GM10248 (cell line): ENCODE measurements at regions of chr11 and their contacts with region 1.

Region 1: GRCh38 chr11:68843703-68844312 is 2.1 kb upstream of the CPT1A start:
- DNase-seq: peak; percentile 85
- CTCF ChIP-seq: peak; percentile 76

Region 2: GRCh38 chr11:68816917-68817419 is 26.8 kb before region 1 on chr11:
- CTCF ChIA-PET with region 1: no interaction called
- POLR2A ChIA-PET with region 1: no interaction called
- DNase-seq: no peak
- CTCF ChIP-seq: no peak

Region 3: DNA sequence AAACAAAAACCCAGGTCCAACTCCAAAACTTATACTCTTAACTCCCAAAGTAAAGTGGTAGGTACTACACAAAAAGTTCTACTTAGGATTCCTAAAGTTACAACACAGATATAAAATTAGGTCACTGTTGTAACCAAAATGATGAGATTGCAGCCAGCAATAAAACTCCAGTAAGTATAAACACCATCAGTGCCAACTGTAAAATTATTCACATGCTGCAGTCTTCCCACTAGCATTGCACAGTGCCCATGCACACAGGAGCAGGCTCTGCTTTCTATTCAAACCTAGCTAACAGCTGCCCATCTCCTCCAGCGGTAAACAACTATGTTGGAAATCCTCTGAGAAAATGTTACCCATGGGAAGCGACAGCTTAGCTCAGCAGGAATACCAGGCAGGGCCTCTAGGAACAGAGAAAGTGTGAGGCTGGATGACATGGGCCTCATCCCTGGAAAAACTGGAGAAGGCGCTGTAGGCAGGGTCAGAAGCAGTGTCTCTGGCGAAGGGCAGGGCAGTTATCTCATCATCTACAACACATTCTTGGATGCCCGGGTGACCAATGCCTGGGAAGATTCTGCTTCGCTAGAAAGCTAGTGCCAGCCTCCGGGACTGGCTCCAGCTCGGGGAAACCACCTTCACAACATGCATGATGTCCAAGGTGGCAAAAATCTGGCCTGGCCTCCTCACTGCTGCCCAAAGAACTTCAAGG is 11.2 kb before region 1 on chr11:
- CTCF ChIA-PET with region 1: interaction called, 10 read pairs
- POLR2A ChIA-PET with region 1: no interaction called
- DNase-seq: no peak
- CTCF ChIP-seq: no peak

Region 4: DNA sequence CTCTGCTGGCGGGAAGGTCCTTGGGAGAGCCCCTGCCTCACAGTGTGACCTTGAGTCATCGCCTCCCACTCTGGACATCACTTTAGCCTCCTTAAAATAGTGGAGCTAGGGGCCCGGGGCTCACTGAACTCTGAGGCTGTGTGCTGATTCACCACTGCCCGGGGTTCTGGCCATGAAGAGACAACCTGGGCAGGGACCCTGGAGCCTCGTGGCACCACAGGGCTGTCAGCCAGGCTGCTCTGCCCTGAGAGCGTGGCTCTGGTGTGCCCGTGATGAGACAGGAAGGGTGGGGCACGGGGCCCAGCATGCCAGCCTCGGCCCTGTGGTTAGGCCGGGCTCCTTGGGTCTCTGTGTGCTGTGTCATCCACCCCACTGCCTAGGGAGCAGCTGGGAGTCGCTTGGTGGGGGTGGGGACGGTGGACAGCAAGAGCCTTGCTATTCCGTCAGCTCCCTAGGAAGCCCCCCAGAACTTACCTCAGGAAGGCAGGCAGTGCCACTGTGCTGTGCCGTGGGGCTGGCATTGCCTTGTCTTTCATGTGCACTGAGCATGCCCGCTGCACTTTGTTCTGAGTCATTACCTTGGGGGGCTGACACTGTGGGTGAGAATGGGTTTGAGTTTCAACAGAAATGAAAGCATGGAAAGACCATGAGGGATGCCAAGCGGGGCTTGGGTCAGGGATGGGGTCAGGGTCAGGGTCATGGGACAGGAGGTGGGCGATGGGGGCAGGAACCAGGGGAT is 236.6 kb after region 1 on chr11:
- CTCF ChIA-PET with region 1: no interaction called
- POLR2A ChIA-PET with region 1: no interaction called
- DNase-seq: no peak
- CTCF ChIP-seq: no peak